ENCODE measurements at regions of chr16 and their contacts with region 1.

Region 1: GRCh38 chr16:85717393-85718121 is 28.8 kb upstream of the GINS2 start:
- DNase-seq: no peak
- H3K4me3 ChIP-seq: no peak overlapping the region
- H3K27ac ChIP-seq: no peak overlapping the region
- H3K4me1 ChIP-seq: peaks cover 32% of the 10 kb centered on the region
- H3K27me3 ChIP-seq: no peaks in the 10 kb centered on the region
- CTCF ChIP-seq: peak; percentile 34 to 81 (median 61)
- POLR2A ChIP-seq: no peak

Region 2: DNA sequence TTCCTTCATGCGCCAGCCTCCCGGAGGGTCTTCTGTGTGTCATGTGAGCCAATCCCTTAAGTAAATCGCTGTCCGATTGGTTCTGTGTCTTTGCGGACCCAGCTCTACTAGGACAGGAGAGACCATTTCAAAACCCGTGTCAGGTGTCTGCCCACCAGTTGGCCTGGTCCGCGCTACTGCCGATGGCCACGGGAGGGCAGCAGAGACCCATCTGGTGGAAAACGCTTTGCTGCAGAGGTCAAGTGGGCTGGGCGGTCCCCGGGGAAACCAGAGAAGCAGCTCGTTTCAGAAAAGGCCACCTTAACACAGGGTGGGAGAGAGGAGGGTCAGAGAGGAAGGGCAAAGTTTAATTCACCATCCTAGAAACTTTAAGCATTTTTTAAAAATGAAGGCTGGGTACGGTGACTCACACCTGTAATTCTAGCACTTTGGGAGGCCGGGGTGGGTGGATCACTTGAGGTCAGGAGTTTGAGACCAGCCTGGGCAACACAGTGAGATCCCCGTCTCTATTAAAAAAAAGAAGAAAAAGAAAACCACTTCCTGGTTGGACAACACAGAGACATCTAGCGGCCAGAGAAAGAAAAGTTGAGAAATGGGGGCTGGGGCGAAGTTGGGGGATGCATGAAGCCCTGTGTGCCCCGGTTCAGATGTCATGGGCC is 602.5 kb before region 1 on chr16:
- intact Hi-C with region 1: loop called (anchors 10 kb)
- DNase-seq: no peak
- H3K4me3 ChIP-seq: peak overlapping the region in 1 of 2 donors; percentile 19
- H3K27ac ChIP-seq: peak overlapping the region; percentile 10
- H3K4me1 ChIP-seq: no peaks in the 10 kb centered on the region
- H3K27me3 ChIP-seq: no peaks in the 10 kb centered on the region
- CTCF ChIP-seq: peak; percentile 91 to 95 (median 92)
- POLR2A ChIP-seq: no peak

Region 3: GRCh38 chr16:85275533-85276249 is 441.9 kb before region 1 on chr16:
- intact Hi-C with region 1: loop called (anchors 10 kb)
- DNase-seq: no peak
- H3K4me3 ChIP-seq: no peak overlapping the region
- H3K27ac ChIP-seq: no peak overlapping the region
- H3K4me1 ChIP-seq: no peaks in the 10 kb centered on the region
- H3K27me3 ChIP-seq: no peaks in the 10 kb centered on the region
- CTCF ChIP-seq: peak; percentile 79 to 89 (median 83)
- POLR2A ChIP-seq: no peak

Region 4: DNA sequence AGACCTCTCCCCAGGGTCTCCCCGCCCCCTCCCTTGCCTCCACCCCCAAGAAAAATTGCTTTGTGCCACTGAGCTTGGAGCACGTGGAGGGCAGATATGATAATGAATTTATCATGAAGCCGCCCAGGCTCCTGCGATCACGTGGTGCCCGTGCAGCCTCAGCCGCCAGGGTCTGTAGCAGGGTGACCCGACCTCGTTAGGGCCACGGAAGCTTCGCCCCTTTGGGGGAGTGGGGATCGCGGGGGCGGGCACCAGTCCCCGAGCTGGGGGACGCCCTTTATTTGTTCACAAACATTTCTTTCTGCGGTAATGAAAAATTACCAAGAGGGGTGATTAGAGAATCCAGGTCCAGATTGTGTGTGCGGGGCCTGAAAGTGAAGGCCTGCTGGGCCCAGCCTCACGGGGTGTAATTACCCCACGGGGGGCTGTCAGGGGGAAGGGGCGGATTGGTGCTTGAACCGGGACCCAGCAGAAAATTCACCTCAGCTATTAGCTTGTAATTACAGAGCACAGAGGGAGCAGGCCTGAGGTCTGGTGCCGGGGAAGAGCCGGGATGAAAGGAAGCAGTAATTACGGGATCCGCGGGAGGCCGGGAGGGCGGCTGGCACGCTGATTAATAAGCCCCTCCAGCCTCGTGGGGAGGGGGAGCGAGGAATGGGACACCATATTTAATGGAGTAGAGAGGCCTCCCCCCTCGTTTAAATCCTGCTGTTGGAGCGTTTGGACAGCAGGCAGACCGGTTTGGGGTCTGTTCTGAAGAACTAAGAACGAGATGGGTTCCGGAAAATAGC is 91.2 kb before region 1 on chr16:
- intact Hi-C with region 1: no loop called
- DNase-seq: no peak
- H3K4me3 ChIP-seq: peak overlapping the region in 1 of 2 donors; percentile 6
- H3K27ac ChIP-seq: no peak overlapping the region
- H3K4me1 ChIP-seq: peaks cover 57% of the 10 kb centered on the region
- H3K27me3 ChIP-seq: no peaks in the 10 kb centered on the region
- CTCF ChIP-seq: no peak
- POLR2A ChIP-seq: no peak